Adrenal gland (tissue), 19 donors: ENCODE measurements at regions of chr11 and their contacts with region 1.

Region 1: DNA sequence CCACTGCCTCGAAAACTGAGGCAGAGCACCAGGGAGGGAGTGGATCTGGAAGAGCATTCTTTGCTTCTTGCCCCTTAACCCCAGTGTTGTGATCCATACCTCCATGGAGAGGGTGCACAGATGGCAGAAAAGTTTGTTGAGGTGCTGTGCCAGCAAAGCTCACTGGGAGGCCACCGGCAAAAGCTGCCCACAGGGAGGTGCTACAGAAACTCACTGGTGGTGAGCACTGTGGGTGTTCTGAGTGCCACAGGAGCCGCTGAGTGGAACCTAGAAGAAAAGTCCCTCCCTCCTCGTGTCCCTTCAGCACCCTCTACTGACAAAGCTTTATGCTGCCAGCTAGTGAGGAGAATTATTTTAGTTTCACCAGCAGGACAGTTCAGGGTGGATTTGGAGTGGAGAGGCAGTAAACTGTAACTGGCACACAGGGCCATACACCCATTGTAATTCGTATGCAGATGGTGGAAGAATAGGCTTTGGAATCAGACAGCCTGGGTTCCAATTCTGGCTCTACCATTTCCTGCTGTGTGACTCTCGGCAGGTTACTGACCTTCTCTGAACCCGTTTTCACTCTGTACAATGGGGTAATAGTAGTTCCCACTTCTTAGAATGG is 84.6 kb downstream of the SWAP70 start:
- DNase-seq: peak; percentile 44 to 83 (median 67)
- H3K4me3 ChIP-seq: no peak overlapping the region
- H3K27ac ChIP-seq: no peak overlapping the region
- H3K4me1 ChIP-seq: peaks cover 0 to 6% of the 10 kb centered on the region in 2 donors
- H3K27me3 ChIP-seq: no peaks in the 10 kb centered on the region
- CTCF ChIP-seq: peak; percentile 56 to 90 (median 75)
- POLR2A ChIP-seq: no peak

Region 2: DNA sequence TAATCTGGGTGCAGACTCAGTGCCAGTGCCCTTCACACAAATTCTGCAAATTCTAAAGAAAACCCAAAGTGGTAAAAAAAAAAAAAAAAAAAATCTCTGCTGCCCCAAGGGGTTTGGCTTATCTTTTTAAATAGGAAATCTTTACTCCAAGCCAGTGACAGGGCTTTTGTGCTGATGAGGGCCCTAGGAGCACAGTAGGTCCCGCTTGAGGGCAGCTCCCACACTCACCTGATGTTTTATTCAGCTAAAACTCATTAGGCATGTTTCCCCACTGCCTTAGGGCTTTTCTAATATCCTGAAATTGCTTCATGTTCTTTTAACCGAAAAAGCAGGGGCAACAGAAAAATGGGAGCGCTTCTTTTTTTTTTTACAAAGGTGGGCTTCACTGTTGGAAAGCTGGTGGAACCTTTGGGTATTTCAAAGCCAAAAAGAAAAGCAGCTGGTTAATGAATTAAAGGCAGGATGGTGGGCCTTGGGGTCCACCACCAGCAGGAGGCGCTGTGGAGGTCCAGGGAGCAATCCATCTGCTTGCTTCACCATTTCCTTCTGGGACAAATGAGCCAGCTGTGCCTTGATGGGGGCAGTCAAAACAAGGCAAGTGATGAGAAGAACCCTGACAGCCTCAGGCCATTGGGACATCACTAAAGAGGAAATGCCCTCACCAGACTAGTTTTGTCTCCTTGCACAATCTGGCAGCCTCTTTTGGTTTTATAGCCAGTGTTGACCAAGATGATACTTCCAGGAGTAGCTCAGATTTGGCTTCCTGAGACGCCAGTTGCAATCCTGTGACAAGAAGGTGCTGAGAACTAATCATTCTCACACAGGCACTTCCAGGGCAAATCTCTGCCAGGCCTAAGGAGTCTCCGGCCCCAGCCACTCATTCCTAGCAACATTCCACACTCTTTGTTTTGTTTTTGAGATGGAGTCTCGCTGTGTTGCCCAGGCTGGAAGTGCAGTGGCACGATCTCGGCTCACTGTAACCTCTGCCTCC is 213.4 kb before region 1 on chr11:
- intact Hi-C with region 1: loop called (anchors 10 kb)
- DNase-seq: peak; percentile 59 to 88 (median 72)
- H3K4me3 ChIP-seq: no peak overlapping the region
- H3K27ac ChIP-seq: peak overlapping the region in 1 of 5 donors; percentile 40
- H3K4me1 ChIP-seq: no peaks in the 10 kb centered on the region
- H3K27me3 ChIP-seq: no peaks in the 10 kb centered on the region
- CTCF ChIP-seq: peak; percentile 51 to 83 (median 76)
- POLR2A ChIP-seq: no peak